ENCODE measurements at regions of chrX and their contacts with region 1.

Region 1: DNA sequence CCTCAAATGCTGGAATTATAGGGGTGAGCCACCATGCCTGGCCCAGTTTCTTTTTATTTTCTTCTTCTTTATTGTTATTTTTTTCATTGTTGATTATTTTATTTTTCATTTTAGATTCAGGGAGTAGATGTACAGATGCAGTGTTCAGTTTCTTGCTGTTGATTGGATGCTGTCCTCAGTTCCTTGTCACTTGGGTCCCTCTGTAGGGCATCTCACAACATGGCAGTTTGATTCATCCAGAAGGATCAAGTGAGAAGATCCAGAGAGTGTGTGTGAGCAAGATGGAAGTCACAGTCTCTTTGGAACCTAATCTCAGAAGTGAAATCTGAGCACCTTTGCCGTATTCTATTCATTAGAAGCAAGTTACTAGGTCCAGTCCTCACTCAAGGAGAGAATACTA is 20.9 kb downstream of the HMGB3 start:
- DNase-seq: no peak
- H3K4me3 ChIP-seq: no peak overlapping the region
- H3K27ac ChIP-seq: no peak overlapping the region
- H3K4me1 ChIP-seq: no peaks in the 10 kb centered on the region
- H3K27me3 ChIP-seq: no peaks in the 10 kb centered on the region
- CTCF ChIP-seq: peak in 2 of 3 experiments; percentile 21 to 30; a peak in 2 of 4 replicates
- EP300 ChIP-seq: no peak
- POLR2A ChIP-seq: no peak
- RAD21 ChIP-seq: peak; percentile 54 to 64

Region 2: GRCh38 chrX:150772150-150772970 is 231.7 kb before region 1 on chrX:
- CTCF ChIA-PET with region 1: interaction called, 16 read pairs
- POLR2A ChIA-PET with region 1: no interaction called
- DNase-seq: peak; percentile 21 to 92
- H3K4me3 ChIP-seq: no peak overlapping the region
- H3K27ac ChIP-seq: no peak overlapping the region
- H3K4me1 ChIP-seq: no peaks in the 10 kb centered on the region; a peak in 2 of 7 replicates
- H3K27me3 ChIP-seq: no peaks in the 10 kb centered on the region
- CTCF ChIP-seq: peak in 2 of 3 experiments; percentile 86 to 90; a peak in 3 of 4 replicates
- EP300 ChIP-seq: no peak
- POLR2A ChIP-seq: no peak
- RAD21 ChIP-seq: peak; percentile 96 to 98

Region 3: DNA sequence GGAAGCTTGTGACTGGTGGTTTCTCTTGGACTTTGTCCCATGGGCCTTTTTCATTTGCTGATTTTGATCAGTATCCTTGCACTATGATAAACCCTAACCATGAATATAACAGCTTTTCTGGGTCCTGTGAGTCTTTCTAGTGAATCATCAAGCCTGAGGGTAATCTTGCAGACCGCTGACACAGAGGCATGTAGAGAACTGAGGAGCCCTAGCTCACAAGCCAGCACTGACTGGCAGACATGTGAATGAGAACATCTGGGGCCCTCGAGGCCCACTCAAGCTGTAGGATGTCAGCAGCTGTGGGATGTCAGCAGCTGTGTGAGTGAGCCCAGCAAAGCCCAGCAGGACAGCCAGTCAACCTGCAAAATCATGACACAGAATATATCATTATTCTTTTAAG is 15.8 kb after region 1 on chrX:
- CTCF ChIA-PET with region 1: no interaction called
- POLR2A ChIA-PET with region 1: no interaction called
- DNase-seq: no peak
- H3K4me3 ChIP-seq: no peak overlapping the region
- H3K27ac ChIP-seq: no peak overlapping the region
- H3K4me1 ChIP-seq: no peaks in the 10 kb centered on the region
- H3K27me3 ChIP-seq: no peaks in the 10 kb centered on the region
- CTCF ChIP-seq: no peak
- EP300 ChIP-seq: no peak
- POLR2A ChIP-seq: no peak
- RAD21 ChIP-seq: no peak

Measured in H1 (cell line).